Heart right ventricle (tissue), 16 donors: ENCODE measurements at regions of chr9 and their contacts with region 1.

Region 1: GRCh38 chr9:68999393-69000105 is 14.4 kb downstream of the PRKACG start:
- DNase-seq: peak in 1 of 2 donors; percentile 84
- ATAC-seq: peak; percentile 86 to 93 (median 91)
- H3K4me3 ChIP-seq: no peak overlapping the region
- H3K27ac ChIP-seq: peak overlapping the region in 9 of 10 donors; percentile 17 to 72 (median 64)
- H3K4me1 ChIP-seq: peaks cover 0 to 45% (median 27%) of the 10 kb centered on the region in 9 donors
- H3K27me3 ChIP-seq: no peaks in the 10 kb centered on the region
- CTCF ChIP-seq: peak; percentile 54 to 87 (median 83)

Region 2: GRCh38 chr9:68584189-68585033 is 415.1 kb before region 1 on chr9:
- intact Hi-C with region 1: loop called (anchors 1 to 10 kb)
- DNase-seq: peak; percentile 68 to 89
- ATAC-seq: peak; percentile 94 to 98 (median 97)
- H3K4me3 ChIP-seq: peak overlapping the region in 1 of 10 donors; percentile 10
- H3K27ac ChIP-seq: peak overlapping the region in 1 of 10 donors; percentile 39
- H3K4me1 ChIP-seq: no peaks in the 10 kb centered on the region
- H3K27me3 ChIP-seq: no peaks in the 10 kb centered on the region
- CTCF ChIP-seq: peak; percentile 95 to 100 (median 99)

Region 3: DNA sequence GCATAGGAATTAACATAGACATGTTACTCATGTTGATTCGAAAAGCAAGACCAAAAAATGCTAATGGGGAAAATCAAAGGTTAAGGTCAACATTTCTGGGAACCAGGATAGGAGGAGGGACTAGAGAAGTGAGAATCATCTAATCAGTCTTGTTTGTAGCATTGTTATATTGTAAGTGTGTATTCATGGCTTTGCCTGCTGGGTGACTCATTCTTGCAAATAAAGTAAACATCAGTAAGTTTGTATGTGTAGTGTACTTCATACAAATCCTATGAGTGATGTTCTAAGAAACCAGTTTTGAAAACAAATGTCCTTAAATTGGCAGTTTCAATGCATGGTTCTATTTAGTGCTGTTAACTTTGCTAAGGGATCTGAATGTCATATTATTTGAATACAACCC is 379.9 kb before region 1 on chr9:
- intact Hi-C with region 1: no loop called
- DNase-seq: no peak
- ATAC-seq: no peak
- H3K4me3 ChIP-seq: no peak overlapping the region
- H3K27ac ChIP-seq: no peak overlapping the region
- H3K4me1 ChIP-seq: no peaks in the 10 kb centered on the region
- H3K27me3 ChIP-seq: no peaks in the 10 kb centered on the region
- CTCF ChIP-seq: no peak

Region 4: GRCh38 chr9:68704814-68705530 is 294.6 kb before region 1 on chr9 and contains the start of gene PIP5K1B:
- intact Hi-C with region 1: loop called in 8 of 10 experiments (anchors 2 to 10 kb)
- DNase-seq: peak; percentile 66 to 76
- ATAC-seq: peak; percentile 82 to 92 (median 86)
- H3K4me3 ChIP-seq: peak within 1 kb of the TSS; percentile 29 to 79 (median 64)
- H3K27ac ChIP-seq: peak within 1 kb of the TSS; percentile 81 to 93 (median 88)
- H3K4me1 ChIP-seq: peaks cover 0 to 32% (median 8%) of the 10 kb centered on the region in 9 donors
- H3K27me3 ChIP-seq: peaks cover 0 to 50% (median 14%) of the 10 kb centered on the region in 7 donors
- CTCF ChIP-seq: peak in 3 of 9 donors; percentile 7 to 36 (median 13)
- total RNA-seq, gene PIP5K1B: 32.2 to 90.8 (median 49.7) TPM

Region 5: DNA sequence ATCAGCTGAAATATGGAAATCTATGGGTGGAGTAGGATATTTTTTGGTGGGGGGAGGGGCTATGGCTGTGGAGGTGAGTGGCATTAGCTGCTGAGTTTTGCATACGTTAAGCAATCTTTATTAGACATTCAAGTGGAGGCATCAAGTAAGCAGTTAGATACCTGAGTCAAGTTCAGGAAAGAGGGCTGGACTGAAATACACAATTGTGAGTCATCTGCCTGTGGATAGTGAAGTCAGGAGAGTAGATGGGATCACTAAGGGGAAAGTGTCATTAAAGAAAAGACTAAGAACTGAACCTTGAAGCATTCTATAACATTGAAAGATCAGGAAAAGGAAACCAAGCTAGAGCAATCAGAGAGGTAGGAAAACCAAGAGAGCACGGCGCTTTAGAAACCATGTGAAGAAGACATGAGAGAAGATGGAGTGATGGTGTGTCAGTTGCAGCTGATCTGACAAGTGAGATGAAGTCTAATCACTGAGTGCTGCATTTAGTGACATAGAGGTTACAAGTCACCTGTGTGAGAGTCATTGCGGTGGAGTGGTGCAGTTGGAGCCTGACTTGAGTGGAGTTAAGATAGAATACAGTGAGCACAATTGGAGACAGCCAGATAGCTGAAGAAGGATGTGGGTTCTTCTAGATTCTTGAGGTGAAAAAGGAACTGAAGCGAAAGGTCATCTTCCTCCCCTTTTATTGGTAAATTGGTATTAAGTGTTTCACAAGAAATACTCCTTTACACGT is 205.8 kb before region 1 on chr9:
- intact Hi-C with region 1: loop called in 3 of 10 experiments (anchors 10 kb)
- DNase-seq: no peak
- ATAC-seq: no peak
- H3K4me3 ChIP-seq: no peak overlapping the region
- H3K27ac ChIP-seq: no peak overlapping the region
- H3K4me1 ChIP-seq: peaks cover 0 to 39% (median 12%) of the 10 kb centered on the region in 9 donors
- H3K27me3 ChIP-seq: no peaks in the 10 kb centered on the region
- CTCF ChIP-seq: no peak

Region 6: DNA sequence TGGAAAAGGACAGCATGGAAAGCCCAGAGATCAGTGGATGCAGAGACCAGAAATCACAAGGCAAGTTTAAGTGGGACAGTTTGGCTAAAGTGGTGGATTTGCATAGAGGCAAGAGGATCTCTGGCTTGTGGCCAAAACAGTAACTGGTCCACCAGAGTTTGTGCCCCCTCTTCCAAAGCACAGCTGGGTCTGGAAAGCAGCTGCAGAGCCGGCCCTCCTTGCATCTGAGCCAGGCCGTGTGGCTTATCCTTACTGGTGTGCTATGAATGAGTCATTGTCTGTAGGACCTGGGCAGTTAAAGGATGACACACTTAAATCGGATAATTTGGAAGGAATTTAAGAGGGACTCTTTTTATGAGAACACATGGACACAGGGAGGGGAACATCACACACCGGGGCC is 147.9 kb before region 1 on chr9:
- intact Hi-C with region 1: loop called in 2 of 10 experiments (anchors 10 kb)
- DNase-seq: no peak
- ATAC-seq: peak in 5 of 8 donors; percentile 42 to 77 (median 50)
- H3K4me3 ChIP-seq: no peak overlapping the region
- H3K27ac ChIP-seq: no peak overlapping the region
- H3K4me1 ChIP-seq: peaks cover 0 to 23% (median 0%) of the 10 kb centered on the region in 9 donors
- H3K27me3 ChIP-seq: no peaks in the 10 kb centered on the region
- CTCF ChIP-seq: no peak

Region 7: GRCh38 chr9:68933434-68934328 is 65.9 kb before region 1 on chr9:
- intact Hi-C with region 1: loop called in 1 of 10 experiments (anchors 10 kb)
- DNase-seq: no peak
- ATAC-seq: no peak
- H3K4me3 ChIP-seq: no peak overlapping the region
- H3K27ac ChIP-seq: peak overlapping the region in 2 of 10 donors; percentile 18 to 19
- H3K4me1 ChIP-seq: peaks cover 0 to 7% (median 0%) of the 10 kb centered on the region in 9 donors
- H3K27me3 ChIP-seq: no peaks in the 10 kb centered on the region
- CTCF ChIP-seq: no peak